PC-9 (cell line): ENCODE measurements at regions of chr6 and their contacts with region 1.

Region 1: GRCh38 chr6:152484806-152485205 is 152.4 kb downstream of the SYNE1 start:
- DNase-seq: no peak
- H3K4me3 ChIP-seq: no peak overlapping the region
- H3K27ac ChIP-seq: no peak overlapping the region
- H3K4me1 ChIP-seq: no peaks in the 10 kb centered on the region
- H3K27me3 ChIP-seq: no peaks in the 10 kb centered on the region
- CTCF ChIP-seq: no peak

Region 2: GRCh38 chr6:152642989-152643388 is 158.2 kb after region 1 on chr6:
- CTCF ChIA-PET with region 1: no interaction called
- POLR2A ChIA-PET with region 1: no interaction called
- intact Hi-C with region 1: loop called (anchors 10 kb)
- DNase-seq: peak in 1 of 2 experiments; percentile 19
- H3K4me3 ChIP-seq: no peak overlapping the region
- H3K27ac ChIP-seq: no peak overlapping the region
- H3K4me1 ChIP-seq: no peaks in the 10 kb centered on the region
- H3K27me3 ChIP-seq: no peaks in the 10 kb centered on the region
- CTCF ChIP-seq: peak; percentile 47; the same call in 1 of the 2 replicates

Region 3: GRCh38 chr6:152669895-152670294 is 185.1 kb after region 1 on chr6:
- CTCF ChIA-PET with region 1: no interaction called
- POLR2A ChIA-PET with region 1: interaction called, 3 read pairs
- intact Hi-C with region 1: loop called (anchors 10 kb)
- DNase-seq: no peak
- H3K4me3 ChIP-seq: no peak overlapping the region
- H3K27ac ChIP-seq: no peak overlapping the region
- H3K4me1 ChIP-seq: no peaks in the 10 kb centered on the region
- H3K27me3 ChIP-seq: no peaks in the 10 kb centered on the region
- CTCF ChIP-seq: peak; percentile 50

Region 4: GRCh38 chr6:153131037-153131981 is 646.5 kb after region 1 on chr6 and contains the start of gene RGS17:
- CTCF ChIA-PET with region 1: no interaction called
- POLR2A ChIA-PET with region 1: no interaction called
- intact Hi-C with region 1: no loop called
- DNase-seq: peak in 1 of 2 experiments; percentile 46
- H3K4me3 ChIP-seq: peak within 1 kb of the TSS; percentile 78
- H3K27ac ChIP-seq: no peak within 1 kb of the TSS
- H3K4me1 ChIP-seq: peaks cover 17% of the 10 kb centered on the region
- H3K27me3 ChIP-seq: no peaks in the 10 kb centered on the region
- CTCF ChIP-seq: no peak
- total RNA-seq, gene RGS17: 0.70 and 0.80 TPM in 2 replicates